AG04450 (cell line): ENCODE measurements at regions of chr9 and their contacts with region 1.

Region 1: GRCh38 chr9:134502809-134503211 is 138.8 kb upstream of the COL5A1 start:
- DNase-seq: peak; percentile 97
- H3K4me3 ChIP-seq: no peak overlapping the region
- H3K27ac ChIP-seq: peak overlapping the region; percentile 93
- H3K27me3 ChIP-seq: peaks cover 13% of the 10 kb centered on the region
- CTCF ChIP-seq: peak; percentile 11; the same call in 1 of the 2 replicates

Region 2: GRCh38 chr9:134492281-134492691 is 10.5 kb before region 1 on chr9:
- CTCF ChIA-PET with region 1: no interaction called
- POLR2A ChIA-PET with region 1: interaction called, 12 read pairs
- DNase-seq: peak; percentile 87
- H3K4me3 ChIP-seq: no peak overlapping the region
- H3K27ac ChIP-seq: peak overlapping the region; percentile 82
- H3K27me3 ChIP-seq: no peaks in the 10 kb centered on the region
- CTCF ChIP-seq: no peak

Region 3: GRCh38 chr9:134533850-134534588 is 31.2 kb after region 1 on chr9:
- CTCF ChIA-PET with region 1: no interaction called
- POLR2A ChIA-PET with region 1: interaction called, 16 read pairs
- DNase-seq: no peak
- H3K4me3 ChIP-seq: no peak overlapping the region
- H3K27ac ChIP-seq: peak overlapping the region; percentile 78
- H3K27me3 ChIP-seq: no peaks in the 10 kb centered on the region
- CTCF ChIP-seq: no peak